IMR-90 (cell line): ENCODE measurements at regions of chr1 and their contacts with region 1.

Region 1: DNA sequence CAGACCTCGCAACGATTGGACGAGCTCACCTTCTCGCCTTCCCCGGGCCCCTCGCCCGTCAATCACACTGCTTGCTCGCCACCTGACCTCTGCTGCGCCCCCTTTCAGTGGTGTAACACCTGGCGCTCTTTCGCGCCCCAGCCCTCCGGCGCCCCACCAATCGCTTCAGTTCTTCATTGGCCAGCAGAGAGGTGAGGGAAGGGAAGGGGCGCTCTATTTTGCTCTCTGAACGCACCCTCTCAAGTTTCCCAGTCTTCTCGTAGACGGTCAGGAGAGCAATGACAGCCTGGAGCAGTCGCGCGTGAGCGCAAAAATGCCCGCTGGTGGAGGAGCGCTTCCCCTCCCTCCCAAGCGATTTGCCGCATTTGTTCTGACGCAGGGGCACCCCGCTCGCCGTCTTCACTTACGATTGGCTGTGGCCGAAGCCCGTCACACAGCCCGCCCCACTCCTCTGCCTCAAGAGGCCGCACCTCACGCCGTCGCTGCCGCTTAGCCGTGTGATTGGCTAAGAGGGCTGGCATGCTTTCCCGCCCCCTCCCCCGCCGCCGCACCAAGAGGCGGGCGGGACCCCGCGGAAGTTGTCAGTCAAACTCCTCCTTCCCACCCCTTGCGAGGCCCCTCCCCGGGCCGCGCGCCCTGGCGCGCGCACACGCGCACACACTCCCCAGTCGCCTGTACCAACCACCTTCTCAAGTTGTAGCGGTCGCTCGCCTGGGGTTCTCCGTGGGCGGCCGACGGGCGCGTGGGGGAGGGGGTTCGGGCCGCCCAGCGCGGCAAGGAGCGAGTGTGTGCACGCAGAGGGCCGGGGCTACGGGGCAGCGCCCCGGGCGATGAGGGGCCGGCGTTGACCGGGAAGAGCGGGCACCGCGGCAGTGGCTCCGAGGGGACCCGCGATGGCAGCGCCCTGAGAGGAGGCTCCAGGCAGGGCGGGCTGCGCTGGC is at the start of gene PPP2R5A:
- DNase-seq: peak; percentile 99
- ATAC-seq: peak; percentile 95
- H3K4me3 ChIP-seq: peak within 1 kb of the TSS; percentile 85
- H3K27ac ChIP-seq: peak within 1 kb of the TSS; percentile 91
- H3K4me1 ChIP-seq: peaks cover 5% of the 10 kb centered on the region
- H3K27me3 ChIP-seq: no peaks in the 10 kb centered on the region
- CTCF ChIP-seq: 0 out of 2 replicates have a peak, but pooled peaks have one; percentile 3
- POLR2A ChIP-seq: peak; percentile 64
- RAD21 ChIP-seq: peak; percentile 20; the same call in 1 of the 2 replicates
- total RNA-seq, gene PPP2R5A: 8.4 and 15.3 TPM in 2 replicates

Region 2: DNA sequence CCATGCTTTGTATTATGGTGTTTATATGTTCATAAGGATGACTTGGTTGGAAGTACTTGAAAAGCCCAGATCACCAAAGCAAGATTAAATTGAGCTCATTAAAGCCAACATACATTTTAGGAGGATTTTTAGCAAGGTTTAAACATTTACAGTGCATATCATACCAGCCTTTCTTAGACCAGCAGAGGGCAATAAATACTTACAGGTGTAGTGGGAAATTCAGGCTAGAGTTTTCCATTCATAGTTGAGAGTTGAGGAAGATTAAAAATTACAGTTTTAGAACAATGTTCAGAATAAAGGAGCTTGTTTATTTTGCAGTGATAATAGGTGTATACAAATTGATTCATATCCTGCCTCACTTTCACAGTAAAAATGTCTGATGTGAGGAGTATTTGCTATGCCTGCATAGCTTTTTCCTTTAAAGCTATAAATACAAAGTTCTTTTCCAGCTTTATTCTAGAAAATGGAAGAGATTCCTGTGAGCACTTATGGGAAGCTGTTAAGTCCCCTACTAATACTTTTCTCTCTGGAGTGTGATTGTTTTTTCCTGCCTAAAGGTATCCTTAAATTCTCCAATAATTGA is 214.2 kb before region 1 on chr1:
- CTCF ChIA-PET with region 1: interaction called, 7 read pairs
- POLR2A ChIA-PET with region 1: no interaction called
- dilution Hi-C with region 1: no loop called
- in situ Hi-C with region 1: loop called (anchors 5 kb)
- intact Hi-C with region 1: loop called (anchors 1 kb)
- DNase-seq: peak; percentile 70
- ATAC-seq: peak; percentile 78
- H3K4me3 ChIP-seq: no peak overlapping the region
- H3K27ac ChIP-seq: no peak overlapping the region
- H3K4me1 ChIP-seq: no peaks in the 10 kb centered on the region
- H3K27me3 ChIP-seq: no peaks in the 10 kb centered on the region
- CTCF ChIP-seq: peak; percentile 91
- POLR2A ChIP-seq: peak; percentile 33; the same call in 1 of the 2 replicates
- RAD21 ChIP-seq: peak; percentile 93

Region 3: DNA sequence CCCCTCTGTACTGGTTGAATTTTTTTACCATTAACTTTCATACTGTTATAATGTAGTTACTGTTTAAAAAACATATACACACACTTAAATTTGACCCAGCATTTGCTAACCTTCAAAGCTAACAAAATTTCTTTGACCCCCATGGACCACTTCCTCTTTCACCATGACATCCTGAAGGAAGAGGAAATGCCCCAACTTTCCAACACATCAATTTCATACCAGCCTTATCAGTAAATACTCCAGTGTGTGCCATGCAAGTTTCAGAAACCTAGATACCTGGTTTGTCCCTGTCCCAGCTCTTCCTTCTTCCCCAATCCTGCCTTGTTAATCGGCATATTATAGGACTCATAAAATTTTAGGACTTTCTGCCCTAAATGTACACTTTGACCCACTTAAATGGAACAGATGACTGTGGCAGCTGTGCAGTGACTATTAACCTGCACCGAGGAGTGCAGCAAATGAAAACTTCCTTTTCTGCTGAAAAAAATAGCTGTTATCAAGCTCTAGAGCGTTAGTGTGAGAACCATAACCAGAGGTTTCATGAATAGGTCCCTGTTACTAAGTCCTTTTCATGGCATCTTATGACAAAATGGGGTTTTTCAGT is 195.4 kb before region 1 on chr1:
- CTCF ChIA-PET with region 1: no interaction called
- POLR2A ChIA-PET with region 1: no interaction called
- dilution Hi-C with region 1: no loop called
- in situ Hi-C with region 1: no loop called
- intact Hi-C with region 1: loop called (anchors 5 kb)
- DNase-seq: no peak
- ATAC-seq: no peak
- H3K4me3 ChIP-seq: no peak overlapping the region
- H3K27ac ChIP-seq: no peak overlapping the region
- H3K4me1 ChIP-seq: peaks cover 2% of the 10 kb centered on the region; the same call in 1 of the 2 replicates
- H3K27me3 ChIP-seq: no peaks in the 10 kb centered on the region
- CTCF ChIP-seq: no peak
- POLR2A ChIP-seq: no peak
- RAD21 ChIP-seq: no peak

Region 4: GRCh38 chr1:212179394-212180076 is 105.5 kb before region 1 on chr1:
- CTCF ChIA-PET with region 1: no interaction called
- POLR2A ChIA-PET with region 1: no interaction called
- dilution Hi-C with region 1: no loop called
- in situ Hi-C with region 1: no loop called
- intact Hi-C with region 1: loop called (anchors 5 kb)
- DNase-seq: peak; percentile 97
- ATAC-seq: peak; percentile 99
- H3K4me3 ChIP-seq: no peak overlapping the region
- H3K27ac ChIP-seq: peak overlapping the region; percentile 19
- H3K4me1 ChIP-seq: peaks cover 10% of the 10 kb centered on the region
- H3K27me3 ChIP-seq: no peaks in the 10 kb centered on the region
- CTCF ChIP-seq: no peak
- POLR2A ChIP-seq: no peak
- RAD21 ChIP-seq: peak; percentile 14; the same call in 1 of the 2 replicates

Region 5: GRCh38 chr1:212218911-212219310 is 66.1 kb before region 1 on chr1:
- CTCF ChIA-PET with region 1: no interaction called
- POLR2A ChIA-PET with region 1: no interaction called
- dilution Hi-C with region 1: no loop called
- in situ Hi-C with region 1: no loop called
- intact Hi-C with region 1: loop called (anchors 2 kb)
- DNase-seq: peak; percentile 89
- ATAC-seq: peak; percentile 90
- H3K4me3 ChIP-seq: no peak overlapping the region
- H3K27ac ChIP-seq: peak overlapping the region; percentile 25; the same call in 1 of the 2 replicates
- H3K4me1 ChIP-seq: peaks cover 8% of the 10 kb centered on the region
- H3K27me3 ChIP-seq: no peaks in the 10 kb centered on the region
- CTCF ChIP-seq: no peak
- POLR2A ChIP-seq: no peak
- RAD21 ChIP-seq: no peak

Region 6: DNA sequence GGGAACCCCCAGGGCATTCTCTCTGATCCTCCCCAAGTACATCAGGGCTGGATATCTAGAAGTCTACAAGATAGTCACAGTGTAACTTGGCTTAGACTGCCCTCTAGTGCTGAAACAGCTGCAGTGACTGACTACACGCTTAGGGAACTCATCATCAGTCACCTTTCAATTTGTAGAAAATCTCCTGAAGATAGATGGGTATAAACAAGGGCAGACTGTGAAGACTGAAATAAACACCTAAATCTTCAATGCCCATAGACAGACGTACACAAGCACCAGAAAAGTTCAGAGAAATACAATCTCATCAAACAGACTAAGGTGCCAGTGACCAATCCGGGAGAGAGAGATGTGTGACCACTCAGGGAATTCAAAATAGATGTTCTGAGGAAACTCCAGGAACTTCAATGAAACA is 83.1 kb after region 1 on chr1:
- CTCF ChIA-PET with region 1: no interaction called
- POLR2A ChIA-PET with region 1: no interaction called
- dilution Hi-C with region 1: no loop called
- in situ Hi-C with region 1: no loop called
- intact Hi-C with region 1: loop called (anchors 1 kb)
- DNase-seq: peak; percentile 81
- ATAC-seq: peak; percentile 98
- H3K4me3 ChIP-seq: no peak overlapping the region
- H3K27ac ChIP-seq: no peak overlapping the region
- H3K4me1 ChIP-seq: no peaks in the 10 kb centered on the region
- H3K27me3 ChIP-seq: no peaks in the 10 kb centered on the region
- CTCF ChIP-seq: peak; percentile 88
- POLR2A ChIP-seq: no peak
- RAD21 ChIP-seq: peak; percentile 93